ENCODE measurements at regions of chr9 and their contacts with region 1.

Region 1: DNA sequence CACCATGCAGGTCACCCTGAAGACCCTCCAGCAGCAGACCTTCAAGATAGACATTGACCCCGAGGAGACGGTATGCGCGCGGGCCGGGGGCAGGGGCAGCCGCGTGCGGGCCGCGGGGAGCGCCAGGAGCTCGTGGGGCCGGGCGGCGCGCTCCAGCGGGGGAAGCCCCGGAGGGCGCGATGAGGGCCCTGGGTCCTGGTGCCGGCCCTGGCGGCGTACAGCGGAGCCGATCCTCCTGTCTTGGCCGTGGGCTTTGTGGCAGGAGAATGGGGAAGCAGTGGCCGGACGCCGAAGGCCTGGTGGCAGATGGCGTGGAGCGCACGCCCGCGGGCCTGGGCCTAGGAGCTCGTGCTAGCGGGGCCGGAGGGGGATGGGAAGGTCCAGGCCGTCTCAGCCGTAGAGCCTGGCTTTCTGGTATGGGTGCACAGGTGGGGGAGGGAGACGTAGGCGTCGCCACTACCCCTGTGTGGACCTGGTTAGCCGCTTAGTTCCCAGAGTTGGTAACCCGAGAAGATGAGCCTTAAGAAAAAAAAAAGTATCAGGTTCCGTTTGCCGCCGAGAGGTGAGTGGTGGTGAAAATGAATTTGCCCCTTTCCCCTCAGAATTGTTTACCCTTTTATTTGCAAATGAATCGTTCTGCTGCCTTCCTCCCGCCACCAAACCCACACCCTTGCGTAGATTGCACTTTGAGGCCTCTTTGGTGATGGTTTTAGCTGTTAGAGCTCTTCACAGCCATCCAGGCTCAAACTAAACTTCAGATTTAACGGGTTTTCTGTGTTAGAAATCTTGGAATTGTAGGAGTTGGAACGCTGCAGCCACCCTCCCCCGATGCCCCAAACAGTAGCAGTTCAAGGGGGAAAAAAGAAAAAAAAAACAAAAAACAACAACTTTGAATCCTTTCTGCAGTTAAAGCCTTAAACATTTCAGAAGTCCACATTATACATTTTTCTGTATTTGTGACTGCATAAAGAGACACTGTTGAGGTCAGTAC is 842 bp downstream of the RAD23B start:
- DNase-seq: peak; percentile 65
- H3K4me3 Mint-ChIP-seq: peak overlapping the region; percentile 94
- H3K27ac Mint-ChIP-seq: peak overlapping the region; percentile 60
- H3K4me1 Mint-ChIP-seq: peaks cover 33% of the 10 kb centered on the region
- H3K27me3 Mint-ChIP-seq: no peaks in the 10 kb centered on the region
- CTCF ChIP-seq: no peak

Region 2: DNA sequence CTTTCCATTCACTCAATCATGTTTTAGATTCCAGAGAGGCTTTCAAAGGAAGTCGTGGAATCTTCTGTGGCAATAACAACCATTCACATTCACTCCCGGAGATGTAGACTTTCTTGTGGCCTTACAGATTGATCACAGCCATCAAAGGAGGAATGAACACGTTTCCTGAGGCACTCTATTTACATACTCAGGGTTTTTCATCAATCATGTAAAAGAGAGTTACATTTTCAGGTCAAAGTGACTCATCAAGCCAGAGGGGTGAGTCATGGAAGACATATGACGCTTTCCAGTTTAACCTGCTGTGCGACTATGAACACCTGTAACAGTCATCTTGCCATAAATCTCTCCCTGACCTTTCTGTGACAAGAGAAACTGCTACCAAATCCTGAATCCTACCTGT is 40.2 kb before region 1 on chr9:
- CTCF ChIA-PET with region 1: interaction called, 4 read pairs
- intact Hi-C with region 1: loop called (anchors 1 kb)
- DNase-seq: peak; percentile 69
- H3K4me3 Mint-ChIP-seq: peak overlapping the region; percentile 24
- H3K27ac Mint-ChIP-seq: peak overlapping the region; percentile 93
- H3K4me1 Mint-ChIP-seq: peaks cover 48% of the 10 kb centered on the region
- H3K27me3 Mint-ChIP-seq: no peaks in the 10 kb centered on the region
- CTCF ChIP-seq: no peak

Region 3: GRCh38 chr9:107323836-107324585 is 40.1 kb after region 1 on chr9:
- CTCF ChIA-PET with region 1: no interaction called
- intact Hi-C with region 1: loop called (anchors 5 kb)
- DNase-seq: no peak
- H3K4me3 Mint-ChIP-seq: no peak overlapping the region
- H3K27ac Mint-ChIP-seq: no peak overlapping the region
- H3K4me1 Mint-ChIP-seq: no peaks in the 10 kb centered on the region
- H3K27me3 Mint-ChIP-seq: no peaks in the 10 kb centered on the region
- CTCF ChIP-seq: no peak